Activated T-helper 1 cell treated with anti-CD3 and anti-CD28 coated beads, Interleukin-12 subunit alpha, Interleukin-12 subunit beta, Interleukin-2, Interleukin-4 antibody, amounts not matched to agents 30 ng/mL and 10 ng/mL and 1 ng/mL, durations not matched to agents 14 hours and 24 hours and 36 hours (primary cell): ENCODE measurements at regions of chr4 and their contacts with region 1.

Region 1: GRCh38 chr4:7987148-7987989 is 47.7 kb upstream of the AFAP1 start:
- DNase-seq: peak; percentile 64
- H3K4me3 Mint-ChIP-seq: no peak overlapping the region
- H3K27ac Mint-ChIP-seq: no peak overlapping the region
- H3K4me1 Mint-ChIP-seq: peaks cover 6% of the 10 kb centered on the region
- H3K27me3 Mint-ChIP-seq: peaks cover 6% of the 10 kb centered on the region

Region 2: GRCh38 chr4:7192252-7193029 is 794.9 kb before region 1 on chr4 and contains the start of gene SORCS2:
- intact Hi-C with region 1: loop called (anchors 5 kb)
- DNase-seq: peak; percentile 28
- H3K4me3 Mint-ChIP-seq: no peak within 1 kb of the TSS
- H3K27ac Mint-ChIP-seq: no peak within 1 kb of the TSS
- H3K4me1 Mint-ChIP-seq: no peaks in the 10 kb centered on the region
- H3K27me3 Mint-ChIP-seq: peaks cover 44% of the 10 kb centered on the region
- total RNA-seq, gene SORCS2: not detected in 2 replicates

Region 3: GRCh38 chr4:7280926-7281690 is 706.3 kb before region 1 on chr4:
- intact Hi-C with region 1: no loop called
- DNase-seq: no peak
- H3K4me3 Mint-ChIP-seq: no peak overlapping the region
- H3K27ac Mint-ChIP-seq: no peak overlapping the region
- H3K4me1 Mint-ChIP-seq: no peaks in the 10 kb centered on the region
- H3K27me3 Mint-ChIP-seq: no peaks in the 10 kb centered on the region

Region 4: DNA sequence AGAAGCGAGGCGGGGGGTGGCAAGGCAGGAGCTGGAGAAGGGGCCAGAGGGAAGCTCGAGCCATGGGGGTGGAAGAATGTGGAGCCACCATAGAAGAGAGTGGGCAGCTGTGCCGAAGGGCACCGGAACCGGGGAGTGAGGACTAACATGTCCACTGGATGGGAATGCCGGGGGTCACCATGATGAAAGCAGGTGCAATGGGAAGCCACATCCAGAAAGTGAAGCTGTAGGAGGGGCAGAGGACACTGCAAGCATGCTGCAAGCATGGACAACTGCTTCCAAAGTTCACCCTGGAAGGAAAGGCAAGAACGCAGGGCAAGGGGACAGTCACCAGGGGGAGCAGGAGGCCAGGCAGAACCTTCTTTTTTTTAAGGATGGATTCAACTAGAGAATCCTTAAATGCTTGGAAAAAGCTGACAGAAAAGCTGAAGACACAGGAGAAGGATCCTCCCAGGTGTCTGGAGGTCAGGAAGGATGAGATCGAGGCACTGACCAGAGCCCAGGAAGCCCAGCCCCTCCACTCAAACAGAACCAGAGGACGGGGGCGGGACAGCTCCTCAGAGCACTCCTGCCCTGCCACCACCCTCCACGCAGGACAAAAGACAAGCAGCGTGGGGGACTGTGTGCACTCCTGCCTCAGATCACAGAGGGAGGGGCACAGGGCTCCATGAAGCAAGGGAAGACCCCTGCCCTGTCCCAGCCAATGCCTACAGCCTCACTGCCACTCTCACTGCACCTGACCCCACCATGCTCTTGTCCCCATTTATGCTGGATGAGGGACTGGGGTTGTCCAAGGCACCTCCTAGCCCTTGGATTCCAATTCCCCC is 216.9 kb before region 1 on chr4:
- intact Hi-C with region 1: loop called (anchors 1 kb)
- DNase-seq: no peak
- H3K4me3 Mint-ChIP-seq: no peak overlapping the region
- H3K27ac Mint-ChIP-seq: peak overlapping the region; percentile 19
- H3K4me1 Mint-ChIP-seq: peaks cover 22% of the 10 kb centered on the region
- H3K27me3 Mint-ChIP-seq: peaks cover 2% of the 10 kb centered on the region

Region 5: DNA sequence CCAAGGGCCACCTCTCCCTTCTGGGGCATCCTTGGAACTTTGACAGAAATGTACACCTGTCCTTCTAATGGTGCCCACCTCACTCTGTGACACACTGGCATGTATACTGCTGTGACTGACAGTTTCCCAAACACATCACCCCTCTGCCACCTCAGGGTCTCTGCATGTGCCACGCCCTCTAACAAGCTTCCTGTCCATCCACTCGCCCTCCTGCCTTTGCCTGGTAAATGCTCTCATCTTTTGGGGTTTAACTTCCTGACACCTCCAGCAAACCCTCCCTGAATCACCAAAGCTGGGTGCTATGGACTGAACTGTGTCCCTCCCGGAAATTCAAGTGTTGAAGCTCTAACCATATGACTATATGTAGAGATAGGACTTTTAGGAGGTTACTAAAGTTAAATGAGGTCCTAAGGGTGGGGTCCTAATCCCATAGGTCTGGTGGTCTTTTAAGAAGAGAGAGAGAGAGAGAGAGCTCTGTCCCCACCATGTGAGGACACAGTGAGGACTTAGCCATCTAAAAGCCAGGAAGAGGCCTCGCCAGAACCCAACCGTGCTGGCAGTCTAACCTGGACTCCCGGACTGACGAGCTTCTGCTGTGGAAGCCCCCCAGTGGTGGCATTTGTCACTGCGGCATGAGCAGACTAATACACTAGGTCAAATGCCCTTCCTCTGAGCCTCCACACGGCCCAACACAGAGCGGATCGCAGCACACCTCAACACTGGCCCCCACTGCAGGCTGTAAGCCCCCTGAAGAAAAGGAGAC is 143.4 kb before region 1 on chr4:
- intact Hi-C with region 1: loop called (anchors 1 kb)
- DNase-seq: peak; percentile 43
- H3K4me3 Mint-ChIP-seq: no peak overlapping the region
- H3K27ac Mint-ChIP-seq: peak overlapping the region; percentile 76
- H3K4me1 Mint-ChIP-seq: peaks cover 20% of the 10 kb centered on the region
- H3K27me3 Mint-ChIP-seq: peaks cover 2% of the 10 kb centered on the region

Region 6: DNA sequence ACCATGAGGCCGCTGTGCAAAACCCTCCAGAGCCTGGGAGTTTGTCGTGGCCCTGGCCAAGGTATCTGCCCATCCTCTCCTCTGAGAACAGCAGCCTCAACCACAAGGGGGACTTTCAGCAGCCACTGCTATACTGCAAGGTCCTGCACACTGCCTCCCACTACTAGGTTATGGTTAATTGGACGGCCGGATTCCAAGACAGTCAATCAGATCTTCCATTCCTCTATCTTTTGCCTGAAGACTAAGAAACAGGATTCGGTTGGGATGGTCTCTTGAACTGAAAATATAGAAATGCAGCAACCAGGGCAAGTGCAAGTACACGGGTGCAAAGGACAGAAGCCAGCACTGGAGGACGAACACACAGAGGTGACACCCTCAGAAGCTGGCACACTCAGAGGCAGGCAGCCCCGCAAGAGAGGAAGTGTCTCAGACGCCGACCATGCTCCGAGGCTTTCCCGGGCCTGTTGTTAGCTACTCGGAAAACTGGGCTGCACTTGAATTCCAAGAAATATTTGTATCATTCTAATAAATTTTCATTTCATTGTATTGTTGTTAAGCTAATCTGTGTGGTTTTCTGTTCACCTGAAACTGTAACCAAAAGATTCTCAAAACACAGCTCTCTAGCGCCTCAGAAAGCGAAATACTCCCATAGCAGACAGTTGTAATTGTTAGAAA is 111.0 kb before region 1 on chr4:
- intact Hi-C with region 1: loop called (anchors 1 kb)
- DNase-seq: no peak
- H3K4me3 Mint-ChIP-seq: peak overlapping the region; percentile 58
- H3K27ac Mint-ChIP-seq: peak overlapping the region; percentile 14
- H3K4me1 Mint-ChIP-seq: peaks cover 41% of the 10 kb centered on the region
- H3K27me3 Mint-ChIP-seq: no peaks in the 10 kb centered on the region

Region 7: DNA sequence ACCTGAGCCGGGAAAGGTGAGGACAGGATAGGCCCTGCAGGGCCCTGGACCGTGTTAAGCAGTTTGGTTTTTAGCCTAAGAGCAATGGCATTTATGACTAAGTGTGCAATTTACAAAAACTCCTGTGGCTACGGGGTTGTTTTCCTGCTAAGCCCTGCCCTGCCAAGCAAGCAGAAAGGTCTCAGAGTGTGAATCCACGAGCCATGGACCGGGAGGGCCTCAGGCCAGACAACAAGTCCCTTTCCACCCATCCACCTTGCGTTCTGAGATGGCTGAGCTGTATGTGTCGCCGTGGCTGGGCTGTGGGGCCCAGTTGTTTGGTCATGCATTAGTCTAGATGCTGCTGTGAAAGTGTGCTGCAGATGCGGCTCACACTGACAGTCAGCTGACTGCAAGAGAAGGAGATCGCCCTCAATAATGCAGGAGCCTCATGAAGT is 13.8 kb before region 1 on chr4:
- intact Hi-C with region 1: loop called (anchors 1 kb)
- DNase-seq: no peak
- H3K4me3 Mint-ChIP-seq: peak overlapping the region; percentile 99
- H3K27ac Mint-ChIP-seq: peak overlapping the region; percentile 83
- H3K4me1 Mint-ChIP-seq: peaks cover 53% of the 10 kb centered on the region
- H3K27me3 Mint-ChIP-seq: no peaks in the 10 kb centered on the region